Ascending aorta (tissue), 2 donors: ENCODE measurements at regions of chr7 and their contacts with region 1.

Region 1: GRCh38 chr7:101688183-101688831 is 59.2 kb upstream of the MYL10 start:
- DNase-seq: peak in 1 of 2 donors; percentile 87
- H3K4me3 ChIP-seq: peak overlapping the region; percentile 11 to 49
- H3K27ac ChIP-seq: no peak overlapping the region
- H3K4me1 ChIP-seq: peaks cover 0 to 6% of the 10 kb centered on the region in 2 donors
- H3K27me3 ChIP-seq: no peaks in the 10 kb centered on the region
- CTCF ChIP-seq: peak; percentile 94 to 98 (median 97)

Region 2: GRCh38 chr7:101602484-101603241 is 85.6 kb before region 1 on chr7:
- intact Hi-C with region 1: loop called (anchors 2 kb)
- DNase-seq: peak in 1 of 2 donors; percentile 82
- H3K4me3 ChIP-seq: peak overlapping the region in 1 of 2 donors; percentile 10
- H3K27ac ChIP-seq: no peak overlapping the region
- H3K4me1 ChIP-seq: peaks cover 0 to 6% of the 10 kb centered on the region in 2 donors
- H3K27me3 ChIP-seq: no peaks in the 10 kb centered on the region
- CTCF ChIP-seq: peak; percentile 86 to 89 (median 88)

Region 3: GRCh38 chr7:102125127-102125561 is 436.8 kb after region 1 on chr7:
- intact Hi-C with region 1: loop called (anchors 2 kb)
- DNase-seq: peak; percentile 68 to 92
- H3K4me3 ChIP-seq: no peak overlapping the region
- H3K27ac ChIP-seq: peak overlapping the region; percentile 70 to 74
- H3K4me1 ChIP-seq: peaks cover 0 to 14% of the 10 kb centered on the region in 2 donors
- H3K27me3 ChIP-seq: no peaks in the 10 kb centered on the region
- CTCF ChIP-seq: peak in 2 of 3 experiments; percentile 23 to 40

Region 4: DNA sequence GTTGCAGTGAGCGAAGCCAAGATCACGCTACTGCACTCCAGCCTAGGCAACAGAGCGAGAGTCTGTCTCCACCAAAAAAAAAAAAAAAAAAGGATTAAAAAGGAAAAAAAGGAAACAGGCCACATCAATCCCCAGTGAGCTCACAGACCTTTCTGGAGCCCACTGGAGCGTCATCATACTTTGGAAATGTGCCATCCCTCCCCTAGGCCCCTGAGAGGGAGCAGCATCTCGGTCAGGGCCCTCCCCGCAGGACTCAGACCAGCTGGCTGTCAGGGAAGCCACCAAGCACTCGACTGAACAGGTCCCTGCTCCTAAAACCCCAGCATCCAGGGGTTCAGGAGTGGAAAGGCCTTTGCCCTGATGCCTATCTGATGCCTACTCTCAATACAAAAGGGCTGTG is 500.4 kb after region 1 on chr7:
- intact Hi-C with region 1: no loop called
- DNase-seq: no peak
- H3K4me3 ChIP-seq: no peak overlapping the region
- H3K27ac ChIP-seq: no peak overlapping the region
- H3K4me1 ChIP-seq: no peaks in the 10 kb centered on the region
- H3K27me3 ChIP-seq: no peaks in the 10 kb centered on the region
- CTCF ChIP-seq: no peak

Region 5: DNA sequence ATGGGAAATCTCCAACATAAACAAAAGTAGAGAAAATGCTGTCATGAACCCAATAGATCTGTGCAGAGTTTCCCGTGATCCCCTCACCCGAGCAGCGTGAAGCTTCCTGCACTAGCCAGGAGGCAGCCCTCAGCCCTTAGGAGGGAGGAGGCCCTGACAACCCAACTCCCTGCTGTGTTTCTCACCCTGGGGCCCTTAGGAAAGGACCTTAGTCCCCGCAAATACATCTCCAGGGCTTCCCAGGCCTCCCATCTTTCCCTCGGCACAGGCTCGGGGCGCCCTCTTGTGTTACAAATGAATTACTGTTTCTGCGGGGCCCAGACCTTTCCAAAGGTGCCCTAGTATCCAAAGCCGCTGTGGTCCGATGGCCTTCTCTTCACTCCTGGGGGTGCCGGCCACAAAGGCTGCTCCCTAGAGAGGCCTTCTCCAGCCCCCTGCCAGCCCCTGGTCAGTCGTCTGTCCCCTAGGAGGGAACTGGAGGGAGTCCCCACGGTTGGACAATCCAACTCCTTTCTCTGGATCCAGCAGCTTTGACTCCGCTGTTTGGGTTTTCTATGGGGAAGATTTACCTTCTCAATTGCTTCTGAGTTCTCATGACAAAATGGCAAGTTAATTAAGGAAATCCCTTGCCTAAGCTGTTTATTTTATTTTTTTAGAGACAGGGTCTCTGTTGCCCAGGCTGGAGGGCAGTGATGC is 548.4 kb after region 1 on chr7:
- intact Hi-C with region 1: loop called (anchors 1 kb)
- DNase-seq: peak in 1 of 2 donors; percentile 77
- H3K4me3 ChIP-seq: no peak overlapping the region
- H3K27ac ChIP-seq: no peak overlapping the region
- H3K4me1 ChIP-seq: no peaks in the 10 kb centered on the region
- H3K27me3 ChIP-seq: no peaks in the 10 kb centered on the region
- CTCF ChIP-seq: peak; percentile 65 to 83 (median 68)

Region 6: GRCh38 chr7:102272075-102272917 is 584.0 kb after region 1 on chr7:
- intact Hi-C with region 1: loop called (anchors 1 kb)
- DNase-seq: peak in 1 of 2 donors; percentile 83
- H3K4me3 ChIP-seq: no peak overlapping the region
- H3K27ac ChIP-seq: no peak overlapping the region
- H3K4me1 ChIP-seq: no peaks in the 10 kb centered on the region
- H3K27me3 ChIP-seq: no peaks in the 10 kb centered on the region
- CTCF ChIP-seq: peak; percentile 85 to 93 (median 85)